ENCODE measurements at regions of chr7 and their contacts with region 1.

Region 1: GRCh38 chr7:55871932-55872485 is 9.5 kb upstream of the SEPTIN14 start:
- DNase-seq: no peak
- H3K4me3 ChIP-seq: no peak overlapping the region
- H3K27ac ChIP-seq: no peak overlapping the region
- H3K4me1 ChIP-seq: no peaks in the 10 kb centered on the region
- H3K27me3 ChIP-seq: no peaks in the 10 kb centered on the region
- CTCF ChIP-seq: no peak

Region 2: GRCh38 chr7:55893940-55894339 is 21.9 kb after region 1 on chr7:
- CTCF ChIA-PET with region 1: no interaction called
- POLR2A ChIA-PET with region 1: no interaction called
- intact Hi-C with region 1: no loop called
- DNase-seq: no peak
- H3K4me3 ChIP-seq: no peak overlapping the region
- H3K27ac ChIP-seq: no peak overlapping the region
- H3K4me1 ChIP-seq: no peaks in the 10 kb centered on the region
- H3K27me3 ChIP-seq: no peaks in the 10 kb centered on the region
- CTCF ChIP-seq: no peak

Region 3: DNA sequence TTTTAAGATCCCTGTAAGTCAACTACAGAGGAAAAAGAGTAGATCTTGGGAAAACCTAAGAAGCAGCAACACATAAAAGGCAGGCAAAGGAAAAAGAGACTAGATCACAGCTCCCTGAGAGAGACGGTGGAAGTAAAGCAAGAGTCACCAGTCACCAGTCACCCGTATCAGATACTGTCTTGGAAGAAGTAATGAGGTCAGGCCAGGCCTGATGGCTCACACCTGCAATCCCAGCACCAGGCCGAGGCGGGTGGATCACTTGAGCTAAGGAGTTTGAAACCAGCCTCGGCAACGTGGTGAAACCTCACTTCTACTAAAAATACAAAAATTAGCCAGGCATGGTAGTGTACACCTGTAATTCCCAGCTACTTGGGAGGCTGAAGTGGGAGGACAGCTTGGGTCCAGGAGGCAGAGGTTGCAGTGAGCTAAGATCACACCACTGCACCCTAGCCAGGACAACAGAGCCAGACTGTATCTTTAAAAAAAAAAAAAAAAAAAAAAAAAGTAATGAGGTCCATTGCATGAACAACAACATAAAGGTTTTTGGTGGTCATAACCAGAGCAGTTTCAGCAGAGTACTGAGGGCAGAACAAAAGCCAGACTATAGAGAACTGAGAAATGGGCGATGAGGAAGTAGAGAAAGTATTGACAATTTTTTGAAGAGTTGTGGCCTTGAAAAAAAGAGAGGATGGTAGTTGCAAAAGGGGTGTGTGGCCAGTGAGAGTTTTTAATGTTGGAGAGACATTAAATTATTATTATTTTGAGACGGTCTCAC is 32.2 kb after region 1 on chr7:
- CTCF ChIA-PET with region 1: no interaction called
- POLR2A ChIA-PET with region 1: interaction called, 12 read pairs
- intact Hi-C with region 1: no loop called
- DNase-seq: no peak
- H3K4me3 ChIP-seq: no peak overlapping the region
- H3K27ac ChIP-seq: no peak overlapping the region
- H3K4me1 ChIP-seq: no peaks in the 10 kb centered on the region
- H3K27me3 ChIP-seq: no peaks in the 10 kb centered on the region
- CTCF ChIP-seq: no peak

Region 4: DNA sequence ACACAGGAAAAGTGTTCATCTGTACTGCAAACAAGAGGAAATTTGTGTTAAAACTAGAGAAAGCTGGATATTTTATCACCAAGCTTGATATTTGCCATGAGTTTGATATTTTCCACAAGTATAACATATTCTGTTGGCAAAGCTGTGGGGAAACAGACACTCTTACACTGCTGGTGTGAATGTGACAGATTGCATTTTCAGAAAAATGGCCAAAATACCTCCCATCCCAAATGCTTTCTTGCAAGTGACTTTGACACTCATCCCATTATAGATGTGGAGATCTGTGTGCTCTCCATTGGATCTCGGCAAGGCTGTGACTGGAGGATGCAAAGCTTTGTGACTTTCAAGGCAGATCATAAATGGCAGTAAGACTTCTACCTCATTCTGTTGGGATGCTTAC is 45.8 kb after region 1 on chr7:
- CTCF ChIA-PET with region 1: no interaction called
- POLR2A ChIA-PET with region 1: no interaction called
- intact Hi-C with region 1: no loop called
- DNase-seq: no peak
- H3K4me3 ChIP-seq: no peak overlapping the region
- H3K27ac ChIP-seq: no peak overlapping the region
- H3K4me1 ChIP-seq: peaks cover under 1% of the 10 kb centered on the region; the same call in 1 of the 2 replicates
- H3K27me3 ChIP-seq: no peaks in the 10 kb centered on the region
- CTCF ChIP-seq: no peak

Measured in PC-9 (cell line).